Activated T-helper 1 cell treated with anti-CD3 and anti-CD28 coated beads, Interleukin-12 subunit alpha, Interleukin-12 subunit beta, Interleukin-2, Interleukin-4 antibody, amounts not matched to agents 30 ng/mL and 10 ng/mL and 1 ng/mL, durations not matched to agents 14 hours and 24 hours and 36 hours (primary cell): ENCODE measurements at regions of chr1 and their contacts with region 1.

Region 1: DNA sequence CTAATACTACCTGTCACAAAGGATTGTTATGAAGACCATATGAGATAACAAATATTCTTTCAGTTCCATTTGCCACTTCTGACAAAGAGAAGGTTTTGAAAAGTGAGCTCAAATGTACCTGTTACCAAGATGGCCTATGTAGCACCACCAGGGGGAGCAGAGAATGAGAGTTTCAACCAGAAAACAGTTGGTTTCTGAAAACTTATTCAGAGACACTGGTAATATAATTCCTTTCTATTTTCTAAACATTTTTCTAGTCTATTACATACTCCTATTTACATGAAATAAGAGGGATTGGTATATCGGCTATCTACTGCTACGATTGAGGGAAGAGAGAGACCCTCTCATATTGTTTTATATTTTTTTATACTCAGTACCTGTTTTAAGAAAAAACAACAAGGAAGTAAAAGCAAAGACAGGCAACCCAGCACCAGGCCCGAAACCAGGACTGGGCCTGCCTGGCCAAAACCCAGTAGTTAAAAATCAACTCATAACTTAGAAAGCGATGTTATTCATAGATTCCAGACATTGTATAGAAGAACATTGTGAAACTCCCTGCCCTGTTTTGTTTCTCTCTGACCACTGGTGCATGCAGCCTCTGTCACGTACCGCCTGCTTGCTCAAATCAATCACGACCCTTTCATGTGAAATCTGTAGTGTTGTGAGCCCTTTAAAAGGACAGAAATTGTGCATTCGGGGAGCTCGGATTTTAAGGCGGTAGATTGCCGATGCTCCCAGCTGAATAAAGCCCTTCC is 48.3 kb downstream of the IL23R start:
- DNase-seq: peak; percentile 42
- H3K4me3 Mint-ChIP-seq: peak overlapping the region; percentile 43
- H3K27ac Mint-ChIP-seq: peak overlapping the region; percentile 61
- H3K4me1 Mint-ChIP-seq: peaks cover 65% of the 10 kb centered on the region
- H3K27me3 Mint-ChIP-seq: no peaks in the 10 kb centered on the region

Region 2: DNA sequence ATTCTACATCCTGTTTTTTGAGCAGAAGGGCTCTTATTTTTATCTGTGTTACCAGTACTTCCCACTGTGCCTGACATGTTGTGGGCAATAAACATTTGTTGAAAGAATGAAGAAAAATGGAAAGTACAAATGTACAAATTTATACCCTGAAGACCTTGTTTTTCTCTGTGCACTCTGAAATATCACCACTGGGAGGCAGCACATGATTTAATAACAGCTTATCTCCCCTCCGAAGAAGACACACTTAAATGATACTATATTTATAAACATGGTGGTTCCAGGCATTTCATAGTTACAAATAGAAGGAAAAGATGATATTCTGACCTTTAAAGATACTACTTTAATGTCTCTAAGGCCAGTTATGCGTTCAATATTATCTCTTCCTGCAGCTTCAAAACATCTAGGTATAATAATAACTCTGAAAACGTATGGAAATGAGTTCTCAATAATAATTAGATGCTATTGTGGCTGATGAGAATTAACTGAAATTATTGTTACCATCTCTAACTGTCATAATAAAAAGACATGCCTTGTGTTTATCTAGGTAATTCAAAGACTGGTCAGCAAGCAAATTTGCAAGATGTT is 449.5 kb before region 1 on chr1:
- intact Hi-C with region 1: loop called (anchors 1 kb)
- DNase-seq: peak; percentile 20
- H3K4me3 Mint-ChIP-seq: no peak overlapping the region
- H3K27ac Mint-ChIP-seq: no peak overlapping the region
- H3K4me1 Mint-ChIP-seq: peaks cover 28% of the 10 kb centered on the region
- H3K27me3 Mint-ChIP-seq: no peaks in the 10 kb centered on the region

Region 3: DNA sequence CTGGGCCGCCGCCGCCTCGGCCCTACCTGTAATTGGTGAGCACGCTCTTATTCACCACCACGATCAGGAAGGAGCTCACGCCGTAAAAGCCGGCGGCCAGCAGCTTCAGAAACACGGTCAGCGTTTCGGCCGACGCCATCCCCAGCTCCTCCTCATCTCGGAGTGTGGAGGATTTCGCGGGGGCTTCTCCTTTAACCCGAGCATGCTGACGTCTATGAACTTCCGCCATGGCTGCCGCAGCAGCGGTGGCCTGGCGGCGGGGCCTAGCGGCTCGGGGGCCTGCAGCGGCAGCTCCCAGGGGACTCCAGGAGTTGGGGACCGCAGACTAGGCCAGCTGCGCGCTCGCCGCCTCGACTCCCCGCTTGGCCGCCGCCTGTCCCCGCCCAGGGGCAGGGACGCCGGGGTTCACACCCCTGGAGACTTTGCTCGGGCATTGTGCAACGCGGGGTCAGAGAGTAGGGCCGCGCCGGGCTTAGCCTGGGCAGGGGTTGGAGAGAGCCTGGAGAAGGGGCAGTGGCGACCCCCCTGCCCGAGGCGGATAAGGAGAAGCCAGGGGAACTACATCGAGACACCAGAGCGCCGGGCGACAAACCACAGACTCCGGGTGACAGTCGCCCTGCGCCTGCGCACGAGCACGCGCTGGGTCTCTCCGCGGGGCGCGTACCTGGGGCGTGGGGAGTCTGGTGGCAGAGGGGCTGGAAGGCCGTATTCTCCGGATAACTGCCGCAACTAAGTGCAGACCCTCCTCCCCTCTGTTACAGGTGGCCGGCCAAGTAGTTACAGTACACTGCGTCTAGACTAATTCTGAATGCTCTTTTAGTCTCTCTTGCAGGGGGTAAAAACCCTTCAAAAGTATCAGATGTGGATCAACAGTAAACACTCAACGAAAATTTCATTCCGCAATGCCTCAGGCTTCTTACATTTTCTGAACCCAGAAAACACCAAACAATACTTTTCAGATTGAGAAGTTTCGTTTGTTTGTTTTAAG is 160.5 kb before region 1 on chr1 and contains the start of gene SLC35D1:
- intact Hi-C with region 1: loop called (anchors 1 kb)
- DNase-seq: peak; percentile 75
- H3K4me3 Mint-ChIP-seq: peak within 1 kb of the TSS; percentile 93
- H3K27ac Mint-ChIP-seq: peak within 1 kb of the TSS; percentile 94
- H3K4me1 Mint-ChIP-seq: peaks cover 49% of the 10 kb centered on the region
- H3K27me3 Mint-ChIP-seq: peaks cover 6% of the 10 kb centered on the region
- total RNA-seq, gene SLC35D1: 20.4 and 20.5 TPM in 2 replicates

Region 4: DNA sequence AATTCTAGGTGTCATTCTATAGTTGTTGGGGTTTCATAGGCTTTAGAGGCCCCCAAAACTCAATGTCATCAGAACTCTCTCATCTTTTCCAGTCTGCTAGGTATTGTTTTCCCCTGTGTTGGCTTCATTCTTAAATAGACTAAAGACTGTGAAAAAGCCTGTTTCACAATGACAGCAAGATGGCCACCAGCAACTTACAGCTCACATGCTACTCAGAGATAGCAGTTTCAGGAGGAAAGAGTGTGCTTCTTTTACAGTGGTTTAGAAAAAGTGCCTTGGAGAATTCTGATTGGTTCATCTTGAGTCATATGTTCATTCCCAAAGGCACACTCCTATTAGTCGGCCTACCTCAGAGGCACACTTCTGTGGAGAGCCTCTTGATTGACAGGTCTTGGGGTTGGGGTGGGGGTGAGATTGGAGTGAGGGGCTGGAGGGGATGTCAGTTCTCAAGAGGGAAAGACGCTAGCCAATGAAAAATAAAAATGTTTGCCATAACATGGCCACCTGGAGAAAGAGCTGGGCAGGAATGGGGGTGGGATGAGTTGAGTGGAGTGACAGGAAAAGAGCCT is 39.8 kb before region 1 on chr1:
- intact Hi-C with region 1: loop called (anchors 1 kb)
- DNase-seq: no peak
- H3K4me3 Mint-ChIP-seq: peak overlapping the region; percentile 76
- H3K27ac Mint-ChIP-seq: peak overlapping the region; percentile 98
- H3K4me1 Mint-ChIP-seq: peaks cover 68% of the 10 kb centered on the region
- H3K27me3 Mint-ChIP-seq: no peaks in the 10 kb centered on the region

Region 5: GRCh38 chr1:67274623-67275325 is 60.2 kb after region 1 on chr1:
- intact Hi-C with region 1: loop called (anchors 1 kb)
- DNase-seq: peak; percentile 54
- H3K4me3 Mint-ChIP-seq: no peak overlapping the region
- H3K27ac Mint-ChIP-seq: peak overlapping the region; percentile 80
- H3K4me1 Mint-ChIP-seq: peaks cover 68% of the 10 kb centered on the region
- H3K27me3 Mint-ChIP-seq: no peaks in the 10 kb centered on the region

Region 6: GRCh38 chr1:67332653-67333529 is 118.3 kb after region 1 on chr1:
- intact Hi-C with region 1: loop called (anchors 2 kb)
- DNase-seq: peak; percentile 64
- H3K4me3 Mint-ChIP-seq: peak overlapping the region; percentile 27
- H3K27ac Mint-ChIP-seq: peak overlapping the region; percentile 99
- H3K4me1 Mint-ChIP-seq: peaks cover 77% of the 10 kb centered on the region
- H3K27me3 Mint-ChIP-seq: no peaks in the 10 kb centered on the region